ENCODE measurements at regions of chr14 and their contacts with region 1.

Region 1: DNA sequence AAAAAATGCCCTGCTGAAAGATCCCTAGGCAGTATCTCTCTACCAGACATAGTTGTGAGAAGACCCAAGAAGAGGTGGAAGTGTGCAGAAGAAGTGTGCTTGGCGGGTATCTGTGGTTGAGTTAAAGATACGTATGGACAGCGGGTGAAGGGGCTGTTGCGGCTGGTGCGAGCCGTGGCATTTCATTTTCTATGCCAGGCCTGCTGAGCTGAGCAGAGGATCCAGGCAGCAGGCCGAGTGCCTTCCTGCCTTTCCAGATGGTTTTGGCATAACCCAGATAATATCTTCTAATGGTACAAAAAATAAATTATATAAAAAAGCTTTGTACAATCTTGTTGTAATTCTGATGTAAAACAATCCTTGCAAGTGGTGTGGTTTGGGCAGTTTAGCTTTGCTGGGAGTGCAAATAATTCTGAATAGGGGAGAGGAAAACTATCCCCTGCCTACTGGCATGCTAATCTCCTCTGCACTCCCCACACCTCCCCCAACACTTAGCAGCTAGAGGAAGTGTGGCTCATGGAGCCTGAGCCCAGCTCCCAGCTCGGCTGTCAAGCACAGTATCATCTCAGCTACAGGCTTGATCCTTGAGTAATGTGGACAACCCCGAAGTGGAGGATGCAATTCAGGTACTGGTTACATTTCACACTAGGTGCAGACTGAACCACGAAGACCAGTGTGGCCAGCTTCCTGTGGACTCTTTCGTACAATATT is 168.9 kb downstream of the VRK1 start:
- DNase-seq: no peak
- H3K4me3 ChIP-seq: no peak overlapping the region
- H3K27ac ChIP-seq: no peak overlapping the region
- H3K4me1 ChIP-seq: no peaks in the 10 kb centered on the region
- H3K27me3 ChIP-seq: no peaks in the 10 kb centered on the region
- CTCF ChIP-seq: no peak
- POLR2A ChIP-seq: no peak

Region 2: GRCh38 chr14:96945721-96946120 is 20.3 kb before region 1 on chr14:
- CTCF ChIA-PET with region 1: no interaction called
- POLR2A ChIA-PET with region 1: no interaction called
- dilution Hi-C with region 1: no loop called
- intact Hi-C with region 1: loop called (anchors 1 kb)
- DNase-seq: no peak
- H3K4me3 ChIP-seq: no peak overlapping the region
- H3K27ac ChIP-seq: no peak overlapping the region
- H3K4me1 ChIP-seq: no peaks in the 10 kb centered on the region
- H3K27me3 ChIP-seq: no peaks in the 10 kb centered on the region
- CTCF ChIP-seq: no peak
- POLR2A ChIP-seq: no peak

Region 3: GRCh38 chr14:97107080-97107479 is 141.0 kb after region 1 on chr14:
- CTCF ChIA-PET with region 1: no interaction called
- POLR2A ChIA-PET with region 1: no interaction called
- dilution Hi-C with region 1: no loop called
- intact Hi-C with region 1: no loop called
- DNase-seq: no peak
- H3K4me3 ChIP-seq: no peak overlapping the region
- H3K27ac ChIP-seq: no peak overlapping the region
- H3K4me1 ChIP-seq: no peaks in the 10 kb centered on the region
- H3K27me3 ChIP-seq: no peaks in the 10 kb centered on the region
- CTCF ChIP-seq: no peak
- POLR2A ChIP-seq: no peak

Region 4: DNA sequence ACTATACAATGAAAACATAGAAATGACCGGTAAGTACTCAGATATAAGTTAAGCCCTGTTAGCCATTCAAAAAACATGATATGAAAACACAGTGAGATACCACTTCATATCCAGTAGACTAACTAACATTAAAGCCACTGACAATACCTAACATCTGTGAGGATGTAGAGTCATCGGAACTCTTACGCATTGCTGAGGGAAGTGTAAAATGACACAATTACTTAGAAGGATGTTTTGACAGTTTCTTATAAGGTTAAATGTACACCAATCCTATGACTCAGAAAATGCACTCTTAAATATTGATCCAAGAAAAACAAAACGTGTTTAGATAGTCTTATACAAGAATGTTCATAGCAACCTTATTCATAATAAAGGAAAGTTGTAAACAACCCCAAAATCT is 1523.1 kb after region 1 on chr14:
- CTCF ChIA-PET with region 1: no interaction called
- POLR2A ChIA-PET with region 1: no interaction called
- dilution Hi-C with region 1: no loop called
- intact Hi-C with region 1: no loop called
- DNase-seq: no peak
- H3K4me3 ChIP-seq: no peak overlapping the region
- H3K27ac ChIP-seq: no peak overlapping the region
- H3K4me1 ChIP-seq: no peaks in the 10 kb centered on the region
- H3K27me3 ChIP-seq: no peaks in the 10 kb centered on the region
- CTCF ChIP-seq: no peak
- POLR2A ChIP-seq: no peak